ENCODE measurements at regions of chr6 and their contacts with region 1.

Region 1: DNA sequence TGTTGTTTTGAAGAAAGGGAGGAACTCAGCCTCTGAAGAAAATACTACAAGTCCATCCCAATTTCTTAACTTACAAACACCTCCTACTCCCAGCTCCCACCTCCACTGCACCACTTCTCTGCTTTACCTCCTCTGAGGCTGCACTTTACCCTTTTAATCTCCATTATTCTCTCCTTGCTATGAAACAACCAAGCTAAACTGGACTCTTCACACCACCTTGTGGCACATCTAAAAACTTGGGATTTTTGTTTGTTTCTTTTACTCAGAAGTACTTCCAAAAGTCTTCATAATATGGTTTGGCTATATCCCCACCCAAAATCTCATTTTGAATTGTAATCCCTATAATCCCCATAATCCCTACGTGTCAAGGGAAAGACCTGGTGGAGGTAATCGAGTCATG is 142.2 kb downstream of the MOXD1 start:
- DNase-seq: no peak
- H3K4me3 ChIP-seq: no peak overlapping the region
- H3K27me3 ChIP-seq: no peaks in the 10 kb centered on the region
- CTCF ChIP-seq: peak; percentile 49

Region 2: DNA sequence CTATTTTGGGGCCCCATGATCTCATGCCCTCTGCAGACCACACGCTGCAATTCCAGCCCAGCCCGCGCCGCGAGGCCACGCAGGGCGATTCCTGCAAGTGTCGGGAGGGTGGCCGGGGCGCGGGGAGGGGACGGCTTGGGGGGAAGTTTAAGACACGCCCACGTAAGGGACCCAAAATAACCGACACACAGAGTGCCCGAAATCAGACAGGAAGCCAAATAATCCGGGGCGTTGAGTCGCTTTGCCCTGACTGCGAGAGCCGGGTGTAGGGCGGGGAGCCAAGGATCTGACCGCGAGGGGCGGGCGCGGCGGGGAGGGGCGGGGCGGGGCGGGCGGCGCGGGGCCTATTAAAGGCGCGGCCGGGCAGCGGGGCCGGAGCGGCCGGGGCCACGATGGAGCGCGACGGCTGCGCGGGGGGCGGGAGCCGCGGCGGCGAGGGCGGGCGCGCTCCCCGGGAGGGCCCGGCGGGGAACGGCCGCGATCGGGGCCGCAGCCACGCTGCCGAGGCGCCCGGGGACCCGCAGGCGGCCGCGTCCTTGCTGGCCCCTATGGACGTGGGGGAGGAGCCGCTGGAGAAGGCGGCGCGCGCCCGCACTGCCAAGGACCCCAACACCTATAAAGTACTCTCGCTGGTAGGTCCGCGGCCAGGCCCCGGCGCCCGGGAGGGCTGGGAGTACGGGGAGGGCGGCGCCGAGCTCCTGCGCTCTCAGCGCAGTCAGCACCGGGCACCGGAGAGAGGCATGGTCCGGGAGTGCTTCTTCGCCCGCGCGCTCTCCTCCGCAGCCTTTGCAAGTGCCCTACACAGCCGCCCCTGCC is 451.2 kb before region 1 on chr6 and contains the start of gene ENPP1:
- CTCF ChIA-PET with region 1: no interaction called
- POLR2A ChIA-PET with region 1: no interaction called
- DNase-seq: no peak
- H3K4me3 ChIP-seq: peak within 1 kb of the TSS; percentile 63
- H3K27me3 ChIP-seq: no peaks in the 10 kb centered on the region
- CTCF ChIP-seq: peak; percentile 46
- polyA plus RNA-seq, gene ENPP1: 8.0 and 15.8 TPM in 2 replicates

Region 3: DNA sequence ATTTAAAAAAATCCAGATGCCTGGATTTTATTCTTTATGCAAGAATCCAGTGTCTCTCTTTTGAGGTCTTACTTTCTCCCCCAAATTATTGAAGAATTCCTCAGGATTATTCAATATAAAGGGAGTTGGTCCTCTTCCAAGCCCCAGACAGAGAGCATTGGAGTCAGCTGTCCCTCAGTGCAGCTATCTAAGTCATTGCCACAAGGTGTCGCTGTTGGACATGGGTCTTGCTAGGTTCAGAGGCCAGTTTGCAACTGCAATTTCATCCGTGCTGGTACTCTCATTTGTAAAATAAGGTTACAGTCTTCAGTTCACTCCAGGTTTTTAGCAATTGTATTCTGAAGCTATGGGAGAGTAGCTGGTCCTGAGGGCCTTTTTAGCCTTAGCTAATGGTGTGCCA is 335.7 kb before region 1 on chr6:
- CTCF ChIA-PET with region 1: interaction called, 118 read pairs
- POLR2A ChIA-PET with region 1: no interaction called
- DNase-seq: no peak
- H3K4me3 ChIP-seq: no peak overlapping the region
- H3K27me3 ChIP-seq: no peaks in the 10 kb centered on the region
- CTCF ChIP-seq: peak; percentile 61

Region 4: GRCh38 chr6:131929264-131929663 is 329.8 kb before region 1 on chr6:
- CTCF ChIA-PET with region 1: interaction called, 118 read pairs
- POLR2A ChIA-PET with region 1: no interaction called
- DNase-seq: no peak
- H3K4me3 ChIP-seq: no peak overlapping the region
- H3K27me3 ChIP-seq: no peaks in the 10 kb centered on the region
- CTCF ChIP-seq: no peak

Region 5: GRCh38 chr6:132247381-132248159 is 11.5 kb before region 1 on chr6:
- CTCF ChIA-PET with region 1: interaction called, 16 read pairs
- POLR2A ChIA-PET with region 1: interaction called, 7 read pairs
- DNase-seq: no peak
- H3K4me3 ChIP-seq: no peak overlapping the region
- H3K27me3 ChIP-seq: no peaks in the 10 kb centered on the region
- CTCF ChIP-seq: peak; percentile 28; the same call in 1 of the 2 replicates

Region 6: DNA sequence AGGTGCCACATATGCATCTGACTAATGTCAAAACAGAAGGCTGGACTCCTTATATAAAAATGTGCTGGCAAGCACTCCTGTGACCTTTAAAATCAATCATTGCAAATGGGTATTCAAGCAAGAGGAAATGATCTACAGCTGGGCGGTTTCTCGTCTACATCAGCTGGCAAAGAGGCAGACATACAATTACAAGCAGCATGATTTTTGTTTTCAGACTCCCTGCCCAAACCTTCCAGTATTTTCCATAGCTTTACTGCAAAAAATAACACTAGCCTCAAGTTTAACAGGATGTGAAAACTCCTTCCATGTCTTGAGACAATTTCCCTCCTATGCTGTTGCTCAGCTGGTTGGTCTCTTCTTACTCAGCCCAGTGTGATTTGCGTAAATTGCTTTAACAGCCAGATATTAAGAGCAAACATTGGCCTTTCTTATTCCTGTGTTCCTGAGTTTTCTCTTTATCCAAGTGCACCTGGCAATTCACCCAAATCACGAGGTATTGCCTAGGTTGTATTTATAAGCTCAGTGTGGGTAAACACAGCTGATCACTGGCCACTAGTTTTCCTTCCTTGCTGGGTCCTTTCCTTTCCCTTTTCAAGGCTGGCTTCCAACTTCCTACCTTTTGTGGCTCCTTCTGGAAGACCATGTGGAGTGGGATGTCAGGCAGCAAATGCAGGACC is 11.8 kb after region 1 on chr6:
- CTCF ChIA-PET with region 1: interaction called, 37 read pairs
- POLR2A ChIA-PET with region 1: no interaction called
- DNase-seq: no peak
- H3K4me3 ChIP-seq: no peak overlapping the region
- H3K27me3 ChIP-seq: no peaks in the 10 kb centered on the region
- CTCF ChIP-seq: no peak

Region 7: GRCh38 chr6:132633362-132633761 is 374.3 kb after region 1 on chr6:
- CTCF ChIA-PET with region 1: no interaction called
- POLR2A ChIA-PET with region 1: no interaction called
- DNase-seq: no peak
- H3K4me3 ChIP-seq: no peak overlapping the region
- H3K27me3 ChIP-seq: no peaks in the 10 kb centered on the region
- CTCF ChIP-seq: no peak